ENCODE measurements at regions of chr7 and their contacts with region 1.

Region 1: DNA sequence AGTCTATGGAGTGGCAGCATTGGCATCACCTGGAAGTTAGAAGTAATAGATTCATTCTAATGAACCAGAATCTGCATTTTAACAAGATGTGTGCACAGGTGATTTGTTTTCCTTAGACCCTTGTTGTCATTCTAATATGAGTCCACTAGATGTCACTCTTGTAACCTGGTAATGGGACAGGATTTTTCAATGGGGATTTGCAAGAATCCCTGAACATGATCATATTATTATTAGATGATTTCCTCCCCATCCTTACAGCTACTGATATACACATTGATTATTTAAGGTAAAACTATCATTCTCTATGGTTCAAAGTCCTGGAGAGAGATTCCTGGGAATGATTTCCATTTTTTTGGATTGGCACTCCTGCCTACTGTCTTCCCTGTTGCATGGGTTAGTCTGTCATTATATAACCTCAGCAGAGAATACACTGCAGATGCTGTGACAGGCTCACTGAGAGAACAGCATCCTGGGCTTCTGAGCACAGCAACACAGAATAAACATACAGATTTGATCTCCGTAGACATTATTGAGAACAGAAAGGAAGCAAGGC is 194.9 kb downstream of the SUGCT start:
- DNase-seq: peak; percentile 51 to 75 (median 73)
- H3K4me3 ChIP-seq: no peak overlapping the region
- H3K27ac ChIP-seq: no peak overlapping the region
- H3K4me1 ChIP-seq: peaks cover 0 to 2% (median 0%) of the 10 kb centered on the region in 4 experiments
- H3K27me3 ChIP-seq: no peaks in the 10 kb centered on the region

Region 2: GRCh38 chr7:40604601-40605438 is 275.1 kb after region 1 on chr7:
- CTCF ChIA-PET with region 1: interaction called, 30 read pairs
- POLR2A ChIA-PET with region 1: no interaction called
- DNase-seq: peak; percentile 60 to 71 (median 66)
- H3K4me3 ChIP-seq: no peak overlapping the region
- H3K27ac ChIP-seq: no peak overlapping the region
- H3K4me1 ChIP-seq: peaks cover 5 to 18% (median 12%) of the 10 kb centered on the region in 4 experiments
- H3K27me3 ChIP-seq: no peaks in the 10 kb centered on the region

Region 3: GRCh38 chr7:41705109-41705901 is 1375.6 kb after region 1 on chr7:
- CTCF ChIA-PET with region 1: interaction called, 10 read pairs
- POLR2A ChIA-PET with region 1: no interaction called
- DNase-seq: peak; percentile 86 to 92 (median 92)
- H3K4me3 ChIP-seq: peak overlapping the region; percentile 21 to 89 (median 72)
- H3K27ac ChIP-seq: no peak overlapping the region
- H3K4me1 ChIP-seq: peaks cover 15 to 44% (median 28%) of the 10 kb centered on the region in 4 experiments
- H3K27me3 ChIP-seq: peaks cover 0 to 3% (median 0%) of the 10 kb centered on the region in 5 experiments